ENCODE measurements at regions of chr15 and their contacts with region 1.

Region 1: DNA sequence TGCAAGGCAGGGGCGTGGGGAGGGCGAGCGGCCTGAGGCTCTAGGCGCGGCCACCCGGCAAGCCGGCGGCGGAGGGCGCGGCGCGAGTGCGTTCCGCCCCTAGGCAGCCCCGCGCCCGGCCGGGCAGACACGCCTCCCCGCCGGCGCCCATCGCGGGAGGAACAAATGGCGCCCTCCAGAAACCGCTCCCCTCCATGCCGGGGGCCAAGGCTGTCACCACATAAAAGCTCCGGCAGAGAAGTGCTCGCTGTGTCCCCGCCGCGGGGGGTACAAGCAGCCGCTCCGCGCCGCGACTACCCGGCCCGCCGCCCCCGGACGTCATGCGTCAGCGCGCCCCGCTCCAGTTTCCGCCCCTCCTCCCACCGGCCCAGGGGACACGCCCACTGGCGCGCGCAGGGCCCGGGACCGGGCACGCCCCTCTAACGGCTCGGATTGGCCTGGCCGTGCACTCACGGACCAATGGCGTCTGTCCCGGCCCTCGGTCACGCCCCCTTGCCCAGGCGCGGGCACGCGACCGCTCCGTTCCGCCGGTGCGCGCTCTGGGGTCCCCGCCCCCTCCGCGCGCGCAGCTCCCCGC is 391 bp upstream of the KLF13 start:
- DNase-seq: peak; percentile 98 to 100 (median 100)
- ATAC-seq: peak; percentile 86
- H3K4me3 ChIP-seq: peak overlapping the region; percentile 72
- H3K4me3 Mint-ChIP-seq: peak overlapping the region; percentile 65 to 92 (median 81)
- H3K27ac ChIP-seq: peak overlapping the region; percentile 99
- H3K27ac Mint-ChIP-seq: peak overlapping the region; percentile 31 to 97 (median 78)
- H3K4me1 ChIP-seq: peaks cover 28 to 36% of the 10 kb centered on the region in 2 donors
- H3K4me1 Mint-ChIP-seq: peaks cover 41 to 64% (median 56%) of the 10 kb centered on the region in 7 donors
- H3K27me3 ChIP-seq: no peaks in the 10 kb centered on the region
- H3K27me3 Mint-ChIP-seq: no peaks in the 10 kb centered on the region

Region 2: DNA sequence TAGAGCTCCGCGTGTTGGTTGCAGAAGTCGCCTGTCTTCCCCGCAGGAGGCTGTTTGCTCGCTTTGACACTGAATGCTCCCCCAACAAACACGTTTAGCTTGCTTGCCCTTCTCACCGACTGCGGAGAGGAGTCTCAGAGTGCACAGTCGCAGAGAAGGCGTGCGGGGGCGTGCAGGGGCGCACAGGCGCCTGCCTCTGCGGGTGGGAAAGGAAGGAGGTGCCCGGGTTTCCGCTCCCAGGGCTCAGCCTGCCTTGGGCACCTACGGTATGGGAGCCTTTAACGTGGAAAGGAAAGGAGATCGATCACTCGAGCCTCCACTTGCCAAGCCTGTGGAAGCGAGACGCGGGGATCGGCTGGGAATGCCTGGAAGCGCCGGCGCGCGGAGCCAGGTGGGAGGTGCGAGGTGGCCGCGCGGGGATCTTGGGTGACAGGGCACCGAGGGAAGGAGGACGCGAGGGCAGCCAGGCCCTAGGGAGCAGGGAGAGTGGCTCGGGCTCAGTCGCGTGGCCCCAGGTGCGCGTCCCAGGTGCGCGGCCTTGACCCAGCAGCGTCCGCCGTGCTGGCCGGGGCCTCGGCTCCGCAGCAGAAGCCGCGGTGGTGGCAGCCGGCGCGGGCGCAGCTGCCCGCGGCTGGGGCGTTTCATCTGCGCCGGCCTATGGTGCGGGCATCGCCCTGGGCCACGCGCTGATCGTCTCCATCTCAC is 422.6 kb before region 1 on chr15 and contains the start of gene FAN1:
- CTCF ChIA-PET with region 1: no interaction called
- POLR2A ChIA-PET with region 1: no interaction called
- intact Hi-C with region 1: loop called in 1 of 2 experiments (anchors 10 kb)
- DNase-seq: peak; percentile 52 to 81 (median 68)
- ATAC-seq: peak; percentile 92
- H3K4me3 ChIP-seq: peak within 1 kb of the TSS; percentile 96
- H3K4me3 Mint-ChIP-seq: peak within 1 kb of the TSS; percentile 93 to 100 (median 96)
- H3K27ac ChIP-seq: peak within 1 kb of the TSS; percentile 47
- H3K27ac Mint-ChIP-seq: peak within 1 kb of the TSS; percentile 75 to 93 (median 88)
- H3K4me1 ChIP-seq: no peaks in the 10 kb centered on the region
- H3K4me1 Mint-ChIP-seq: peaks cover 19 to 59% (median 37%) of the 10 kb centered on the region in 7 donors
- H3K27me3 ChIP-seq: no peaks in the 10 kb centered on the region
- H3K27me3 Mint-ChIP-seq: no peaks in the 10 kb centered on the region
- total RNA-seq, gene FAN1: 24.0 to 29.5 (median 28.2) TPM

Region 3: DNA sequence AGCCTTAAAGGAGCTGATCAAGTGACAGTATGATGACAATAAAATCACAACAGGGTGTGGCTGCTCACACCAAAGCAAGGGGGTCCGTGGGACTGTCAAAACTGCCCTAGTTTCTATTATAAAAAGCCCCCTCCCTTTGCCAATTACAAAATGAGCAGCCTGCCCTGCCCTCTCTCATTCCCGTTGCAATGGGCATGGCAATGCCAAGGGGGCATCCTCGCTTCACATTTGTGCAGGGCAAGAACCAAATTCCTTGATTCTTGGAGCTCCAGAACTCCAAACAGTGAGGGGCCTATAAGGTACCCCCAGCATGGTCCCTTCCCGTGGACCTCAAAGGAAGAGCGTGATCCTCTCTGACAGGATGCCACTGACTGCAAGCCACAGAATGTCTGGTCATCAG is 119.9 kb before region 1 on chr15:
- CTCF ChIA-PET with region 1: interaction called, 3 read pairs
- POLR2A ChIA-PET with region 1: interaction called, 16 read pairs
- intact Hi-C with region 1: loop called (anchors 1 to 5 kb)
- DNase-seq: no peak
- ATAC-seq: no peak
- H3K4me3 ChIP-seq: no peak overlapping the region
- H3K4me3 Mint-ChIP-seq: no peak overlapping the region
- H3K27ac ChIP-seq: no peak overlapping the region
- H3K27ac Mint-ChIP-seq: peak overlapping the region in 1 of 9 donors; percentile 4
- H3K4me1 ChIP-seq: peaks cover 13 to 46% of the 10 kb centered on the region in 2 donors
- H3K4me1 Mint-ChIP-seq: peaks cover 10 to 53% (median 46%) of the 10 kb centered on the region in 7 donors
- H3K27me3 ChIP-seq: no peaks in the 10 kb centered on the region
- H3K27me3 Mint-ChIP-seq: peaks cover 0 to 12% (median 0%) of the 10 kb centered on the region in 5 donors

Region 4: GRCh38 chr15:31265871-31266711 is 60.2 kb before region 1 on chr15:
- CTCF ChIA-PET with region 1: interaction called, 16 read pairs
- POLR2A ChIA-PET with region 1: interaction called, 141 read pairs
- intact Hi-C with region 1: loop called (anchors 1 kb)
- DNase-seq: peak; percentile 43 to 90 (median 86)
- ATAC-seq: peak; percentile 84
- H3K4me3 ChIP-seq: peak overlapping the region; percentile 24
- H3K4me3 Mint-ChIP-seq: peak overlapping the region; percentile 71 to 95 (median 78)
- H3K27ac ChIP-seq: peak overlapping the region; percentile 81
- H3K27ac Mint-ChIP-seq: peak overlapping the region; percentile 94 to 100 (median 96)
- H3K4me1 ChIP-seq: peaks cover 48 to 88% of the 10 kb centered on the region in 2 donors
- H3K4me1 Mint-ChIP-seq: peaks cover 62 to 99% (median 96%) of the 10 kb centered on the region in 7 donors
- H3K27me3 ChIP-seq: no peaks in the 10 kb centered on the region
- H3K27me3 Mint-ChIP-seq: no peaks in the 10 kb centered on the region

Region 5: GRCh38 chr15:31344823-31345605 is 18.8 kb after region 1 on chr15:
- CTCF ChIA-PET with region 1: interaction called, 4 read pairs
- POLR2A ChIA-PET with region 1: interaction called, 367 read pairs
- intact Hi-C with region 1: loop called (anchors 1 kb)
- DNase-seq: no peak
- ATAC-seq: no peak
- H3K4me3 ChIP-seq: peak overlapping the region; percentile 44
- H3K4me3 Mint-ChIP-seq: peak overlapping the region; percentile 75 to 94 (median 85)
- H3K27ac ChIP-seq: peak overlapping the region; percentile 94
- H3K27ac Mint-ChIP-seq: peak overlapping the region; percentile 75 to 99 (median 97)
- H3K4me1 ChIP-seq: peaks cover 98 to 100% of the 10 kb centered on the region in 2 donors
- H3K4me1 Mint-ChIP-seq: peaks cover 79 to 100% (median 98%) of the 10 kb centered on the region in 7 donors
- H3K27me3 ChIP-seq: no peaks in the 10 kb centered on the region
- H3K27me3 Mint-ChIP-seq: no peaks in the 10 kb centered on the region

Region 6: DNA sequence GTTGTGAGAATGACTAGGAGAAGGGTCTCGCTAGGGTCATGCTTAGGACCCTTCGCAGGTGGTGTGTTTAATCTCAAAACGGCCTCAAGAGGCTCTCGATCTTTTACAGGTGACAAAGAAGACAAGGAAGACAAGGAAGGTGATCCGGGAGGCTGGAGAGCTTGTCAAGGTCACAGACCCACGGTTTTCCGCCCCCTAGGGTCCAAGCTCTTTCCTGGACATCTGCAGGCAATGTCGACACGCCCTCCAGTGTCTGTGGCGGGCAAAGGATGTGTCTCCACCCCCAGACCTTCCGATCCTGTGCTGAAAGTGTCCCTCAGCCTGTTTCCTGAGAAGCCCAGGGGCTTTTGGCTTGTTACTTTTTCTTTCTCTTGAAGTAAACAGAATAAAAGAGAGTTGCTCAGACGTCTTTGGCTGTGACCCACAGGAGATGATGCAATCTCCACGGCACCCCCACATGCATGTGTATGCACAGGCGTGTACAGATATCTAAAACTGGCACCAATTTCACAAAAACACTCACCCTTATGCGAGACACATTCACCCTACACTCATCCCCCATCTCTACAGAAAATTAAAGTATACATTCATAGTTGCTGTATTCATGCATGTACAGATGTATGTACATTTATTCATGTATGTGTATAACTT is 109.1 kb after region 1 on chr15:
- CTCF ChIA-PET with region 1: interaction called, 8 read pairs
- POLR2A ChIA-PET with region 1: interaction called, 77 read pairs
- intact Hi-C with region 1: loop called (anchors 1 kb)
- DNase-seq: peak; percentile 53 to 93 (median 87)
- ATAC-seq: peak; percentile 84
- H3K4me3 ChIP-seq: peak overlapping the region; percentile 48
- H3K4me3 Mint-ChIP-seq: peak overlapping the region; percentile 80 to 95 (median 86)
- H3K27ac ChIP-seq: peak overlapping the region; percentile 83
- H3K27ac Mint-ChIP-seq: peak overlapping the region; percentile 96 to 100 (median 99)
- H3K4me1 ChIP-seq: peaks cover 55 to 58% of the 10 kb centered on the region in 2 donors
- H3K4me1 Mint-ChIP-seq: peaks cover 44 to 90% (median 84%) of the 10 kb centered on the region in 7 donors
- H3K27me3 ChIP-seq: no peaks in the 10 kb centered on the region
- H3K27me3 Mint-ChIP-seq: no peaks in the 10 kb centered on the region

Region 7: DNA sequence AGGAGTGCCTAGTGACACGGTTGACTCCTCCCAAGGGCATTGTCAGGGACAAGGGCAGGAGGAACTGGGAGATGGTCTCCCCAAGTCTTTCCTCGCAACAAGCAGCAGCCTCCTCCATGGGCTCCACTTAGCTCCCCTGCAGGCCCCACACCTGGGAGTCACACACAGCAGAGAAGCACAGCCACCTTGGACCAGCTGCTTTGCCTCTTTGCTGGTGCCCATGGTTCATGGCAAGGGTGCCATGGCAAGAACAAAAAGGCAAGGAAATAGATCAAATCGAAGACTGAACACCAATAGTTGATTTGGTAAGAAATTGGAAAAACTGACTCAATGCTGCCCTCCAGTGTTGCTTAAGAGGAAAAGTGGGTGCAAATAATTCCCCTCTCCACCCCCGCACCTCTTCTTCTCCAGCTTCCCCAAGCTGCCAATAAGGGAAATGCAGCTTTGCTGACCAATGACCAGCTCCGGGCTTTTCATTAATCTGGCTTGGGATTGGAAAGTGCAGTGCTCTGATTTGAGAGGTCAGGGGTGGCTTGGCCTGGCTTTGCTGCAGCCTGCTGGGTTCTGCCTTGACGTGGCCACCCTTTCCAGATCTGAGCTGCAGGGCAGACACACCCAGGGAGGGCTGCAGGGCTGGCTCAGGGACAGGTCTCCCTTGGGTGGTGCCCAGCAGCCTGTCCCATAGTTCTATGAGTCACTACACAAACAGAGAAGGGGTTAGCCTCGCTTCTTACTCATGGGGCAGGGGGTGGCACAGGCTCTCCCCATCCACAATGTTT is 162.4 kb after region 1 on chr15:
- CTCF ChIA-PET with region 1: no interaction called
- POLR2A ChIA-PET with region 1: interaction called, 15 read pairs
- intact Hi-C with region 1: loop called (anchors 1 kb)
- DNase-seq: peak; percentile 25 to 70 (median 64)
- ATAC-seq: peak; percentile 78
- H3K4me3 ChIP-seq: no peak overlapping the region
- H3K4me3 Mint-ChIP-seq: peak overlapping the region in 2 of 10 donors; percentile 47 to 65
- H3K27ac ChIP-seq: no peak overlapping the region
- H3K27ac Mint-ChIP-seq: peak overlapping the region in 6 of 9 donors; percentile 14 to 87 (median 68)
- H3K4me1 ChIP-seq: peaks cover 23 to 26% of the 10 kb centered on the region in 2 donors
- H3K4me1 Mint-ChIP-seq: peaks cover 14 to 71% (median 28%) of the 10 kb centered on the region in 7 donors
- H3K27me3 ChIP-seq: no peaks in the 10 kb centered on the region
- H3K27me3 Mint-ChIP-seq: no peaks in the 10 kb centered on the region

Measured in naive thymus-derived CD4-positive, alpha-beta T cell (primary cell).